Cardiac septum (tissue), 1 donor: ENCODE measurements at regions of chr1 and their contacts with region 1.

Region 1: DNA sequence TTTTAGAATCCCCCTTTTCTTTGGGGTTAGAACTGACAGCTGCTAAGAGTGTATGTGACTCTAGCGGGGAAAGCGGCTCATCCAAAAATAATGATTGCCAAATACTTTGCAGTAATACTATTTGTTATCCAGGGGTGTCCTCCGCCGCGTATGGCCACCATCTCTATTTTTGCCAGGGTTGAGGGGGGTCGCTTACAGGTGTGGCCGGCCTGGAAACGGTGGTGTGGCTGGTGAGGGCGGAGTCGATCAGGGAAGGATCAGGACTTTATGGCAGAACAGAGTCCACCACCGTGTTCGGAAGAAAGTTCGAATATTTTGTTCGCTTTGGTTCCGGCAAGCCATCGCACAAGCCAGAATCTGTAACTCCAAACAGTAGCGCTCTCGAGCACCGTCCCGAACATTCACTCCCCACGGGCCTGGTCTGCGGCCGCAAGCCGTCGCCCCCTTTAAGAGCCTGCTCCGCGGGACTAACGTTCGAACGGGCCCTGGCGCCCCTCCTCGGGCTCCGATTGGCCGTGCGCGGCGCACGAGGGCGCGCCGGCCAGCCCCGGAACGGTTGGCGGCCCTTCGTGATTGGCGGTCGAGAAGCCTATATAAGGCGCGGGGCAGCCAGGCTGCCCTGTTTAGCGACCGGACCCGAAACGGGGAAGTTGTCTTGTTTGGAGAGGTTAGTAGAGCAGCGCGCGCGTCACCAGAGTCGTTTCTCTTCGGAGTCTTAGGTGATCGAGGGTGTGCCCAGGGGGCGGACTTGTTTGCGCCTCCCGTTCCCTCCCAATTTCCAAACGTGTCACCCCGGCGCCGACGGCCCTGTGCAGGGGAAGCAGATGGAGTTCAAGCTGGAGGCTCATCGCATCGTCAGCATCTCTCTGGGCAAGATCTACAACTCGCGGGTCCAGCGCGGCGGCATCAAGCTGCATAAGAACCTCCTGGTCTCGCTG is at the start of gene IER5:
- DNase-seq: peak; percentile 99
- total RNA-seq, gene IER5: 20.5 TPM

Region 2: GRCh38 chr1:180926164-180926981 is 162.0 kb before region 1 on chr1:
- intact Hi-C with region 1: loop called (anchors 5 kb)
- DNase-seq: no peak

Region 3: DNA sequence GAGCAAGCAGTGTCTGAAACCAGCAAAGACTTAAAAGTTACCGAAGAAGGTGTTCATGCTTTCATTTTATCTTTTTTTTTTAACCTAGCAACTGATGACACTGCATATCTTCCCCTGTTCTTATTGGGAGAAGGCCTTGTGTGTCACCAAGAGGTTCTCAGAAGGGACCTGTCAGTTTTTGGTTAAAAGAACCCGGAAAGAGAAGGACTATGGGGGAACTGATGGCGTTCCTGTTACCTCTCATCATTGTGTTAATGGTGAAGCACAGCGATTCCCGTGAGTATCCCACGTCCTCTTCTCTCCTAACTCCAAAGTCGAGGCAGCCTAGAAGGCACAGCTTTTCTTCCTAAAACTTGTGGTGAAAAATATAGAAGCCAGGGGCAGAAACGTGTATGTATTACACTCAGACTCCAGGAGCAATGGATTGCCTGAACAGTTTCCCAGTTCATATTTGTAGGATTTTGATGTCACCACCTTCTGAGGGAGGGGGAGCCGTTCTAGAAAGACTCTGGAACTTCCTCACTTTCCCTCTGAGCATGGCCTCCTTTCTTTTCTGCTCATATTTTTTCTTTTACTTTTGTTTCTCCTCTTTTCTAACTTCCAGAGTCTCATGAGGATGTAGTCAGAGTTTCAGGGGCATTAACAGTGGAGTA is 54.4 kb before region 1 on chr1 and contains the start of gene MR1:
- intact Hi-C with region 1: loop called (anchors 5 kb)
- DNase-seq: no peak
- total RNA-seq, gene MR1: 4.6 TPM

Region 4: GRCh38 chr1:181142096-181142958 is 54.0 kb after region 1 on chr1:
- intact Hi-C with region 1: loop called (anchors 1 kb)
- DNase-seq: peak; percentile 95

Region 5: DNA sequence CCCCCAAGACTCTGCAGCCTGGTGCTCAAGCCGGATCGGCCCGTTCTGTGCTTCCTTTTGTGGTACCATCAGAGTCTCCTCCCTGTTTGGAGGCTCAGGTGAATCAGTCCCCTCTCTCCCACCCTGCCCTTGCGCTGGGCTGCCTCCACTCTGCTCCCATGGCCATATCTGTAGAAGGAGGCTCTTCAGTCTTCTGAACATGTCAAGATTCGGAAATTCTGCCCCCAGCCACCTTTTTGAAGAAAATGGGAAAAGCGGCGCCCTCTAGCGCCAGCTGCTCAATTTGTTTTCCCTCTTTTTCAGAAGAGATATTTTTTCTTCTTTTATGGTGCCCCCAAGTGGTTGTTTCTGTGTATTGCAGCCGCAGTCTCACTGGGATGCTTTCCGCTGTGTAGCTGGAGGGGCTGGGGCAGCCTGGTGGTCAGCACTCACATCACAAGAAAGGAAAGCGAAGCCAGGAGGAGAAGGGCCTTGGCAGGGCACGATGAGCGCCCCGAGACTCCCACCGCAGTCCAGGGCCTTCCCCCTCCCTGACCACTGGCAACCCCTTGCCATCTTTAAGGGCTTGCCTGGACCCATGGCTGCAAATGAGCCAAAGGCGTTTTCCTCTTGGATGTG is 336.5 kb after region 1 on chr1:
- intact Hi-C with region 1: loop called (anchors 10 kb)
- DNase-seq: peak; percentile 81